ENCODE measurements at regions of chr2 and their contacts with region 1.

Region 1: DNA sequence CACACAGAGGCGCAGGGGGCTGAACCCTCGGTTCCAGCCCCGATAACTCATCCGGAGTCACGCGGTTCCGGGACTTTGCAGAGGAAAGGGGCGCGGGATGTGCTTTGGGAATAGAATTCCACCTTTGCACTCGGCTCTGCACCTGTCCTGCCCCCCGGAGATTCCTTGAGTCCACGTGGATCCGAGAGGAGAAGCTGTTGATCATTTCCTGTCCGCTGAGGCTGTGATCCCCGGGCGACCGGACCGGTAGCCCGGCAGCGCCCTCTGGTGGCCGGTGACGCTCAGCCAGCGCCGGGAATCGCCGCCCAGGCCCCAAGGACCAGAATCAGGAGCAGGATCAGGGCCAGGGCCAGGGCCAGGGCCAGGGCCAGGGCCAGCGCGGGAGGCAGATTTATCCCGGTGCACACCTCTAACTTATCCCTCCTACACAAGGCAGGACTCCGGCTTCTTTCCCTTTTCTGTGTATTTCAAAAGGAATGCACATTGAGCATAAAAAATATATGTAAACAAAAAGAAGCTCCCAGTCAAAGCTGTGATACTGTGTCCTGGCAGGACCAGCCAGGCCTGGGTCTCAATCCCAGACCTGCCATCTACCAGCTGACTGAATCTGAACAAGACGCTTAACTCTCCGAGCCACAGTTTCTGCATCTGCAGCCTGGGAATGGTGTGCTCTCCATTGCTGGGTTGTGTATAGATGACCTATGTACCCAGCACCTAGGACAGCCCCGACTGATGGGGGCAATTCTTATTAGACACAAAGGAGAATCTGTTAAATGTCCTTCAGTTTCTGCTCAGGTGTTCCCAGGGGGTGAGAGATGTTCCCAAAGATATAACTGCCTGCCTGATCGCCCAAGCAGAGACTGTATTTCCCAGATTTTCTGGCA is 8.5 kb upstream of the SPATA3 start:
- DNase-seq: peak; percentile 75 to 91 (median 91)
- ATAC-seq: peak; percentile 82 to 89
- H3K4me3 ChIP-seq: peak overlapping the region; percentile 31
- H3K27ac ChIP-seq: no peak overlapping the region
- H3K4me1 ChIP-seq: no peaks in the 10 kb centered on the region
- H3K27me3 ChIP-seq: no peaks in the 10 kb centered on the region

Region 2: GRCh38 chr2:230781130-230781797 is 206.1 kb before region 1 on chr2:
- intact Hi-C with region 1: no loop called
- DNase-seq: no peak
- ATAC-seq: peak; percentile 46 to 60
- H3K4me3 ChIP-seq: no peak overlapping the region
- H3K27ac ChIP-seq: peak overlapping the region; percentile 78
- H3K4me1 ChIP-seq: peaks cover 7% of the 10 kb centered on the region
- H3K27me3 ChIP-seq: no peaks in the 10 kb centered on the region

Region 3: GRCh38 chr2:230824406-230824978 is 162.9 kb before region 1 on chr2:
- intact Hi-C with region 1: loop called in 3 of 4 experiments (anchors 5 kb)
- DNase-seq: peak; percentile 29 to 57 (median 41)
- ATAC-seq: peak; percentile 69 to 74
- H3K4me3 ChIP-seq: no peak overlapping the region
- H3K27ac ChIP-seq: no peak overlapping the region
- H3K4me1 ChIP-seq: no peaks in the 10 kb centered on the region
- H3K27me3 ChIP-seq: no peaks in the 10 kb centered on the region

Region 4: GRCh38 chr2:230847883-230848388 is 139.4 kb before region 1 on chr2:
- intact Hi-C with region 1: loop called in 2 of 4 experiments (anchors 5 kb)
- DNase-seq: peak; percentile 89 to 95 (median 94)
- ATAC-seq: peak; percentile 91 to 96
- H3K4me3 ChIP-seq: no peak overlapping the region
- H3K27ac ChIP-seq: no peak overlapping the region
- H3K4me1 ChIP-seq: no peaks in the 10 kb centered on the region
- H3K27me3 ChIP-seq: no peaks in the 10 kb centered on the region

Region 5: GRCh38 chr2:230902180-230902899 is 85.0 kb before region 1 on chr2:
- intact Hi-C with region 1: loop called (anchors 2 kb)
- DNase-seq: peak; percentile 44 to 81 (median 46)
- ATAC-seq: peak; percentile 37 to 73
- H3K4me3 ChIP-seq: no peak overlapping the region
- H3K27ac ChIP-seq: no peak overlapping the region
- H3K4me1 ChIP-seq: no peaks in the 10 kb centered on the region
- H3K27me3 ChIP-seq: no peaks in the 10 kb centered on the region

Region 6: GRCh38 chr2:231111987-231112386 is 124.6 kb after region 1 on chr2:
- intact Hi-C with region 1: no loop called
- DNase-seq: no peak
- ATAC-seq: no peak
- H3K4me3 ChIP-seq: no peak overlapping the region
- H3K27ac ChIP-seq: no peak overlapping the region
- H3K4me1 ChIP-seq: no peaks in the 10 kb centered on the region
- H3K27me3 ChIP-seq: no peaks in the 10 kb centered on the region

Measured in right cardiac atrium (tissue), 5 donors.